BJ (cell line): ENCODE measurements at regions of chr1 and their contacts with region 1.

Region 1: GRCh38 chr1:40032240-40032891 is 8.2 kb upstream of the CAP1 start:
- DNase-seq: no peak
- H3K4me3 ChIP-seq: no peak overlapping the region
- H3K27me3 ChIP-seq: no peaks in the 10 kb centered on the region; the same call in 1 of the 2 replicates
- CTCF ChIP-seq: peak; percentile 64

Region 2: DNA sequence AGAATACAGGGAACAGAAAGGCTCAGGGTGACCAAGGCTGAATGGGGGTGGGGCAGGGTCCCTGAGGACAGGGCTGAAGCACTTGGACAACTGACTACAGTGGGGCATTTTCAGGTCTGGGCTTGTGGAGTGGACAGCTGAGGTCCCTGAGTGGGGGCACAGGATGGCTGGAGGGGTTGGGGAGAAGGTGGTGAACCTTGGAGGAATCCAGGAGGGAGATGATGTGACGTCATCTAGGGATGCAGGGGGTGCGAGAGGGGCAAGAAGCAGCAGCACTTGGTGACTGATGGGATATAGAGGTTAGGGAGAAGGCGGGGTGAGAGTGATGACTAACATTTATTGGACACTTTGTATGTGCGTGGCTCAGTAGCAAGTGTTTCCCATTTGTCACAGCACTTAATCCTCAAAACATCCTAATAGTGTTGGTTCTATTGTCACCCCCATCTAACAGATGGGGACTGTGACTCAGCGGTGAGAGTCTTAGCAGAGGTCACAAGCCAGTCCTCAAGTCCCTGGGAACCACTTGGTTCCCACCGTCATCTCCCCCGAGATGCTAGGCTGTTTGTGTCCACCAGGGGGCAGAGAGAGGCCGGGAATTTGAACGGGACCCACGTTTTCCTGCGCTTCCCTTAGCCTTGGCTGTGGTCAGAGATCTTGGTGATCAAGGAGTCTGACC is 215.8 kb before region 1 on chr1:
- CTCF ChIA-PET with region 1: interaction called, 10 read pairs
- POLR2A ChIA-PET with region 1: no interaction called
- DNase-seq: peak; percentile 65
- H3K4me3 ChIP-seq: no peak overlapping the region
- H3K27me3 ChIP-seq: peaks cover 3% of the 10 kb centered on the region
- CTCF ChIP-seq: peak; percentile 78

Region 3: DNA sequence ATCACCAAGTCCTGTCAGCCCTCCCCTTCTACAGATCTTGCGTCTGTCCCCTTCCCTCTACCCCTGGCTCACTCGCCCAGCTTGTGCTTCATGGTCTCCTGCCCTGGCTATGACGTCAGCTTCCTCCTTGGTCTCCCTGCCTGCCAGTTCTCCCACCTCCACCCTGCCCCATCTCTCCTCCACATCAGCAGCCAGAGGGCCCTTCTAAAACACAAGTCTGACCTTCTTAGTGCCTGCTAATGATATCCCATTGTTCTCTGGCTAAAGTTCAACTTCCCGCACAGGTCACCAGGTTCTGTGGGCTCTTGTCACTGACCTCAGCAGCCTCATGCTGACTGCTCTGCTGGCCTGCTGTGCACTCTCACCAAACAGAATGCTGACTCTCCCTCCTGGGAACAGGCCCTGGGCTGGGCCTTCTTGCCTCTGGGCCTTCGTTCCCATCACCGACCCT is 106.0 kb before region 1 on chr1:
- CTCF ChIA-PET with region 1: interaction called, 92 read pairs
- POLR2A ChIA-PET with region 1: no interaction called
- DNase-seq: no peak
- H3K4me3 ChIP-seq: no peak overlapping the region
- H3K27me3 ChIP-seq: peaks cover 2% of the 10 kb centered on the region
- CTCF ChIP-seq: no peak

Region 4: DNA sequence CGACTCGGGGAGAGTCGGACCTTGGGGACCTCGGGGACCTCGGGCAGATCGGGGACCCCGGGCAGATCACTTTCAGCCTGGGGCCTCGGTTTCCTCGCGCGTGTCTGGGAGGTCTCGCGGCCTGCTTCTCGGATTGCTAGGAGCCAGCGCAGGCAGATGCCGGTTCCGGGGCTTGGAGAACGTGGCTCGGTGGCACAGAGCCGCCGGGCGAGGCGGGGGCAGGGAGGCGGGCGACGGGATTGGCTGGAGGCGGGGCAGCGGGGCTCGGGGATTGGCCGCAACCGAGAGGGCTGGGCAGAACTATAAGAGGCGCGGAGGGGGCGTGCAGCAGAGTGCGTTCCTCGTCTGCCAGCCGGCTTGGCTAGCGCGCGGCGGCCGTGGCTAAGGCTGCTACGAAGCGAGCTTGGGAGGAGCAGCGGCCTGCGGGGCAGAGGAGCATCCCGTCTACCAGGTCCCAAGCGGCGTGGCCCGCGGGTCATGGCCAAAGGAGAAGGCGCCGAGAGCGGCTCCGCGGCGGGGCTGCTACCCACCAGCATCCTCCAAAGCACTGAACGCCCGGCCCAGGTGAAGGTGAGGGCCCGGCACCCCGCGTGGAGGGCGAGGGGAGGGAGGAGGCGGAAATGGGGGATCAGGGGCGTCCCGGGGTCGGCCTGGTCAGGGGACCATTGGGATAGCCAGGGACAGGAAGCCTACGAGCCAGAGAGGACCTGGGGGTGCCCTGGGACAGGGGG is 77.4 kb before region 1 on chr1 and contains the start of gene MFSD2A:
- CTCF ChIA-PET with region 1: interaction called, 10 read pairs
- POLR2A ChIA-PET with region 1: interaction called, 3 read pairs
- DNase-seq: peak; percentile 52
- H3K4me3 ChIP-seq: peak within 1 kb of the TSS; percentile 52
- H3K27me3 ChIP-seq: no peaks in the 10 kb centered on the region
- CTCF ChIP-seq: no peak
- polyA plus RNA-seq, gene MFSD2A: 0.94 and 2.0 TPM in 2 replicates